ENCODE measurements at regions of chr12 and their contacts with region 1.

Region 1: DNA sequence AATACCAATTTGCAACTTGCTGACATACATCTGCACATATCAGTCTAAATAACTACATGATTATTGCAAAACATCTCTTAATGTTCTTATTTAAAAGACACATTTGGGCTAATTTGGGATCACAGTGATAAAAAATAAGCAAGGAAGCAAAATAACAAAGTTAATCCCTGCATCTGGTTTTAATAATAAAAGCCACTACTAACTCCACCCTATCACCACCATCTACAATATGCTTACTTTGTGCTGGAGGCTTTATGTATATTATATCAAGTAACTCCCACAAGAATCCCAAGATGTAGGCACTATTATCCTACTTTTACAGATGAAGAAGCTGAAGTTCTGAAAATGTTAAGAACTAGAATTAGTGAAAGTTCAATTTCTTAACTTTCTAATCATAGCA is 45.7 kb downstream of the TAOK3 start:
- DNase-seq: no peak
- H3K4me3 Mint-ChIP-seq: no peak overlapping the region
- H3K27ac Mint-ChIP-seq: no peak overlapping the region
- H3K4me1 Mint-ChIP-seq: peaks cover 29% of the 10 kb centered on the region
- H3K27me3 Mint-ChIP-seq: no peaks in the 10 kb centered on the region

Region 2: GRCh38 chr12:118307069-118307954 is 19.7 kb before region 1 on chr12:
- CTCF ChIA-PET with region 1: no interaction called
- intact Hi-C with region 1: loop called (anchors 2 kb)
- DNase-seq: peak; percentile 66
- H3K4me3 Mint-ChIP-seq: peak overlapping the region; percentile 41
- H3K27ac Mint-ChIP-seq: peak overlapping the region; percentile 47
- H3K4me1 Mint-ChIP-seq: peaks cover 37% of the 10 kb centered on the region
- H3K27me3 Mint-ChIP-seq: no peaks in the 10 kb centered on the region